ENCODE measurements at regions of chr2 and their contacts with region 1.

Region 1: GRCh38 chr2:62724886-62725711 is 19.6 kb downstream of the EHBP1 start:
- DNase-seq: peak; percentile 28
- ATAC-seq: peak in 1 of 2 donors; percentile 38

Region 2: DNA sequence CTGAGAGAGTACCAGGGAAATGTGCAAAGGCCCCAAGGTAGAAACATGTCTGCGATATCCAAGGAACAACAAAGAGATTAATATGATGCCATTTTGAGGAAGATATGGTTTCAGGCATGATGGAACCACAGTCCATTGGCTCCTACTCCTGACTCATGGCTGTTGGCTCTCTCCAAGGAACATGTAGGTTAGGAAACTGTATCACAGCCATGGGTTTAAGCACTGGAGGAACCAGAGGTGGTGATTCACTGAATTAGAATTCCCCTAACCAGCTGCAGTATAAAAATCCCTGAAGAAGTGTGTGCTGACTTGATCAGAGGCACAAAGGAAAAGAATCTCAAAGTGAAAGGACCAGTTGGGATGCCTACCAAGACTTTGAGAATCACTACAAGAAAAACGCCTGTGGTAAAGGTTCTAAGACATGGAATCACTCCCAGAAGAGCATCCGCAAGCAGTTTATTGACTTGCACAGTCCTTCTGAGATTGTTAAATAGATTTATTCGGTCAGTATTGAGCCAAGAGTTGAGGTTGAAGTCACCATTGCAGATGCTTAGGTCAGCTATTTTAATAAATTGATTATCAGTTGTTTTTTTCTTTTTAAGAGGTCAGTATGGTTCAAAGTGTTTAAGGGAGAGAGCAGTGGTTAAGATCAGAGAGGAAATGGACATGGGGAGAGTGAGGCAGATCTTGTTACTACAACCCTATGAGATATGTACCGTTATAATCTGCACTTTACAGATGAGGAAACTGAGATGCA is 214.8 kb after region 1 on chr2:
- intact Hi-C with region 1: loop called in 1 of 2 experiments (anchors 5 kb)
- DNase-seq: no peak
- ATAC-seq: no peak

Measured in left cardiac atrium (tissue), 4 donors.